ENCODE measurements at regions of chr7 and their contacts with region 1.

Region 1: DNA sequence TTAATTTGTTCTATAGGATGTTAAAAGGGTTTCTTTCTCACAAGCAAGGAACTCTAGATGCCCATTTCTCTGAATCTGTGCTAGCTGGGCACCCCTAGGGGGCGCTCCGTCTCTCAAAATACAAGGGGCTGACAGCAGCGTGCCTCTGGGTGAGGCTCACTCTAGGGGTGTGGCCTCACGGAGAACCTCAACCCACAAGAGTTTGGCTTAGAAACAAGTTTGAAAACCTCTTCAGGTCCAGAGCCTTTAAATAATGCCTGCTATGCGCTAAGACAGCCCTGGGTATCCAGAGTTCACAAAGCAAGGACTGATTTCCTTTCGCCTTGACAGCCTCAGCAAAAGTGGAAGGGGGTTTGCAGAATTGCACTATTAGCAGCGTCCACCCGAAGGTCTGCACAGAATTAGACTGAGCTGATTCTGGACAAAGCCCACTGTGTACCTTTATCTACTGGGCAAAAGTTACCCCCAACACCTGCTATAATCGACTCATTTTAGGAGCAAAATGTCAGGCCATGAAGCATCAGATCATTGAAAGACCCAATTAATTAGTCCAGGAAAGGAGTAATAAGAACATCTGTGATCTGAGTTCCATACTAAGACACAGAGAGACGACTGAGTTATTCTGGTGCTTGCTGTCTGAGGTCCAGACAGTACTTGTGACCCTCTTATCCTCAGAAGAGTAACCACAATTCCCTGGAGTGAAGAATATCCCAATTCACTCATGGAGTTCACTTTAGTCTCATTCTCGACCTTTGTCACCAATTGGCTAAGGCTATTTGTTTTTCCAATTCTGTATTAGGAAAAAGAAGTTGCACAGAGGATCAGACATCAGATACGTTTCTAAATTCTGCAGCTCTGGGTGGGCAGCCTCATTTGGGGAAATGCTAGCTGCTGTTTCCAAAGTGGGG is 574 bp upstream of the CPED1 start:
- DNase-seq: peak; percentile 81
- ATAC-seq: peak; percentile 92
- H3K4me3 ChIP-seq: peak overlapping the region; percentile 45 to 60
- H3K27ac ChIP-seq: no peak overlapping the region
- H3K4me1 ChIP-seq: peaks cover 0 to 15% of the 10 kb centered on the region in 2 experiments; a peak in 1 of 4 replicates
- H3K27me3 ChIP-seq: no peaks in the 10 kb centered on the region
- CTCF ChIP-seq: peak; percentile 87 to 98 (median 98)
- POLR2A ChIP-seq: no peak
- RAD21 ChIP-seq: peak; percentile 90

Region 2: GRCh38 chr7:121081327-121081936 is 93.5 kb after region 1 on chr7:
- CTCF ChIA-PET with region 1: interaction called, 10 read pairs
- POLR2A ChIA-PET with region 1: no interaction called
- RAD21 ChIA-PET with region 1: interaction called in 1 of 2 experiments, 4 read pairs
- intact Hi-C with region 1: loop called (anchors 2 kb)
- DNase-seq: peak; percentile 44
- ATAC-seq: peak; percentile 60
- H3K4me3 ChIP-seq: no peak overlapping the region
- H3K27ac ChIP-seq: no peak overlapping the region
- H3K4me1 ChIP-seq: peaks cover 9 to 39% of the 10 kb centered on the region in 2 experiments
- H3K27me3 ChIP-seq: no peaks in the 10 kb centered on the region
- CTCF ChIP-seq: peak; percentile 49 to 70 (median 58); a peak in 5 of 6 replicates
- POLR2A ChIP-seq: no peak
- RAD21 ChIP-seq: peak; percentile 71

Region 3: DNA sequence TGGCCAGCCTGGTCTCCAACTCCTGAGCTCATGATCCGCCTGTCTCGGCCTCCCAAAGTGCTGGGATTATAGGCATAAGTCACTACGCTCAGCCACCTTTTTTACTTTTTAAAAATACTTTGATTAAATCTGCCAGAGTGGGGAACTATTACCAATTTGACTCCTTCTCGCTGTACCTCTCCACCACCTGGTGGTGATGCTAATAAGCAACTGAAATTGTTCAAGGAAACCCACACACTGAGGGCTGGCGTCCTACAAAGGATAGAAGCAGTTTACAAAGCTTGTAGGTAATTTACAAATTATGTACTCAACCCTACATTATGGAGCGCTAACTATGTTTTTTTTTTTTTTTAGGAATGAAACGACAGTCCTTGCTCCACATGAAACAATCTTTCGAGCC is 111.6 kb after region 1 on chr7:
- CTCF ChIA-PET with region 1: interaction called, 5 read pairs
- POLR2A ChIA-PET with region 1: no interaction called
- RAD21 ChIA-PET with region 1: no interaction called
- intact Hi-C with region 1: loop called (anchors 1 kb)
- DNase-seq: no peak
- ATAC-seq: peak; percentile 70
- H3K4me3 ChIP-seq: no peak overlapping the region
- H3K27ac ChIP-seq: no peak overlapping the region
- H3K4me1 ChIP-seq: peaks cover 8 to 10% of the 10 kb centered on the region in 2 experiments; a peak in 3 of 4 replicates
- H3K27me3 ChIP-seq: no peaks in the 10 kb centered on the region
- CTCF ChIP-seq: peak; percentile 18 to 42 (median 36); a peak in 3 of 6 replicates
- POLR2A ChIP-seq: no peak
- RAD21 ChIP-seq: peak; percentile 57

Region 4: DNA sequence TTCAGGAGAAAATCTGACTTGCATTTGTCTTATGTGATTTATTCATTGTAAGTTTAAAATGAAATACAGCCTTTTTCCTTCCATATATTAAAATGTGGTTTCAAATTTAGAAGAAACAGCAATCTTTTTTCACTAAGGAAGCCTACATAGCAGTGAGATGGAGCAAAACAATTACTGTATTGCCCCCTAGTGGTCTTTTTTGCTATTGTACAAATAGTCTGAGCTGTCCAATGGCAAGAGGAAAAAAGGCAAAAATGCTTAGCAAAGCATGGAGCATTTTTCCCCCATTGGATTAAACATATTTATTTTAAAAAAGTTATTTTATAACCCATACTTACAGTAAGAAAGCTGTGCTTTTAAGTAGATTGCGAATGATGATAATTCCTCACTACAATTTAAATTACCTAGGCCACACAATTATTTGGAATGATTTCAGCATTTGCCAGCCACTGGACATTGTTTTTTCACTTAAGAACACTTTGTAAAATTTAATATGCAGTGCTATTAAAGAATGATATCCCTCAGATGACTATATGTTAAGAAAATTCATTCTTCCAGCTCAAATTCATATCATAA is 120.1 kb after region 1 on chr7:
- CTCF ChIA-PET with region 1: interaction called, 23 read pairs
- POLR2A ChIA-PET with region 1: no interaction called
- RAD21 ChIA-PET with region 1: interaction called in 1 of 2 experiments, 6 read pairs
- intact Hi-C with region 1: loop called (anchors 2 kb)
- DNase-seq: peak; percentile 52
- ATAC-seq: peak; percentile 97
- H3K4me3 ChIP-seq: no peak overlapping the region
- H3K27ac ChIP-seq: no peak overlapping the region
- H3K4me1 ChIP-seq: peaks cover under 1 to 3% of the 10 kb centered on the region in 2 experiments; a peak in 2 of 4 replicates
- H3K27me3 ChIP-seq: no peaks in the 10 kb centered on the region
- CTCF ChIP-seq: peak; percentile 67 to 84 (median 77)
- POLR2A ChIP-seq: no peak
- RAD21 ChIP-seq: peak; percentile 85

Region 5: DNA sequence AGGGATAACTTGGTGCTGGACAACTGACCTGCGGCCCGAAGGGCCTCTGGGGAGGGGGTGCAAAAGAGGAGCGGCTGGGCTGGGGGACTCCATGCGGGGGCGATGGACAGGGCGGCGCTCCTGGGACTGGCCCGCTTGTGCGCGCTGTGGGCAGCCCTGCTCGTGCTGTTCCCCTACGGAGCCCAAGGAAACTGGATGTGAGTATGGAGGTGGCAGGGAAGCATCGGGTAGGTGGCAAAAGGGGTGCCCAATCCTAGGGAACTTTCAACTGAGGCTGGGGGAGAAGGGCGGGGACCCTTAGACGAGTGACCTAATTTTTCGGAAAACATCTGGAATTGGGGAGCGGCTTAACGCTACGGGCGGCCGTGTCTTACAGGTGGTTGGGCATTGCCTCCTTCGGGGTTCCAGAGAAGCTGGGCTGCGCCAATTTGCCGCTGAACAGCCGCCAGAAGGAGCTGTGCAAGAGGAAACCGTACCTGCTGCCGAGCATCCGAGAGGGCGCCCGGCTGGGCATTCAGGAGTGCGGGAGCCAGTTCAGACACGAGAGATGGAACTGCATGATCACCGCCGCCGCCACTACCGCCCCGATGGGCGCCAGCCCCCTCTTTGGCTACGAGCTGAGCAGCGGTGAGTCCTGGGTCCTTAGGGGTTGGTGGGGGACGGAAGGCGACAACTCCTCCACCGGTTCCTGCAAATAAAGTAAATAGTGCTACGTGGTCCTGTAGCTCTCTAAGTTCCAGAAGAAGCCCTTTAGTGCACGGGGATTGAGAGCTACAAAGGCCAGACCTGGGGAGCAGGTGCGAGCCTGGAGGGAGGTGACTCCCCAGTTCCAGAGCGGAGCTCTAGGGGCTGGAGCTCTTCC is 341.5 kb after region 1 on chr7:
- CTCF ChIA-PET with region 1: no interaction called
- POLR2A ChIA-PET with region 1: no interaction called
- RAD21 ChIA-PET with region 1: no interaction called
- intact Hi-C with region 1: loop called (anchors 10 kb)
- DNase-seq: no peak
- ATAC-seq: peak; percentile 56
- H3K4me3 ChIP-seq: peak overlapping the region; percentile 55 to 88
- H3K27ac ChIP-seq: peak overlapping the region; percentile 92
- H3K4me1 ChIP-seq: peaks cover 35 to 68% of the 10 kb centered on the region in 2 experiments; a peak in 3 of 4 replicates
- H3K27me3 ChIP-seq: no peaks in the 10 kb centered on the region
- CTCF ChIP-seq: 0 out of 6 replicates have a peak, but pooled peaks of 1 of the 3 experiments have one; percentile 19
- POLR2A ChIP-seq: peak; percentile 8
- RAD21 ChIP-seq: peak; percentile 25; the same call in 1 of the 2 replicates